Sigmoid colon (tissue), 7 donors: ENCODE measurements at regions of chr2 and their contacts with region 1.

Region 1: DNA sequence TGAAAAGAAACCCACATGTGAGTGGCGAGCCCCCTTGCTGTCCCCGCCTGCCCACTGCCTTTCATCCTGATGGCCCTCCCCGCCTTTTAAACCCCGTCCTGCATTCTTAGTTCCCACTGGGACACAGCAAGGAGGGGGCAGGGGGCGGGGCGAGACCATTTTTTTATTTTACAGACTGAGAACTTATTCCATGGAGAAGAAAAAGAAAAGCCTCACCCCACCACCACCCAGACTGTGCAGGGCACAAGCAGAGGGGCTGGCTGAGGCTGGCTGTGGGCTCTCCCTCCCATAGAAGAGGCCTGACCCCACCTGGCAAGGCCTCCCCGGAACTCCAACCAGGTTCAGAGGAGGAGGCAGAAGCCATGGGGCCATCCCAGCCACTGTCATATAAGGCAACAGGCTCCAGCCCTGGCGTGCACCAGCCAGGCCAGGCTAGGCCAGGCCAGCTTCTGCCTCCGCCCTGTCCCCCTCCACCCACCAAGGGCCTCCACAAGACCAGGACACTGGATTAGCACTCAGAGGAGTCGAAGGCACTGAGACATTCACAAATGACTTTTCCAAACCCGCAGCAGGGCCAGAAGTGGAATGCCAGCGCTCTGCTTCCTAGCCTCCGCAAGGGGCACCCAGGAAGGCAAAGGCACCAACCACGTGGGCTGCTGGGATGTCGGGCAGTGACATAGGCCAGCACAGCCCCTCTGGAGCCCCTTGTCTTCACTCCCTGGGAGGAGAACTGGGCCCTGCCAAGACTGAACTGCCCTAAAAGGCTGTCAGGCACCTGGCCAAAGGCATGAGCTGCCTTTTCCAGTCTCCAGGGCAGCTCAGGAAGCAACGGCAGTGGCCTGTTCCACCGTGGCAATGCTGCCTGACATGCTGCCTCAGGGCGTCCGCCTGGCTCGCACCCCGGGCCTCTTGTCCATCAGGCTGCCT is 37.5 kb upstream of the SEMA4C start:
- DNase-seq: peak; percentile 97
- H3K4me3 ChIP-seq: peak overlapping the region; percentile 23 to 30 (median 26)
- H3K27ac ChIP-seq: peak overlapping the region; percentile 92 to 97 (median 93)
- H3K4me1 ChIP-seq: peaks cover 5 to 62% (median 56%) of the 10 kb centered on the region in 4 donors
- H3K27me3 ChIP-seq: no peaks in the 10 kb centered on the region
- CTCF ChIP-seq: no peak
- EP300 ChIP-seq: peak in 2 of 4 donors; percentile 69 to 73
- POLR2A ChIP-seq: peak; percentile 50 to 56

Region 2: GRCh38 chr2:96868555-96869280 is 38.7 kb before region 1 on chr2:
- intact Hi-C with region 1: loop called (anchors 1 kb)
- DNase-seq: peak; percentile 97
- H3K4me3 ChIP-seq: peak overlapping the region; percentile 65 to 98 (median 96)
- H3K27ac ChIP-seq: peak overlapping the region; percentile 99 to 100 (median 100)
- H3K4me1 ChIP-seq: peaks cover 0 to 71% (median 67%) of the 10 kb centered on the region in 4 donors
- H3K27me3 ChIP-seq: no peaks in the 10 kb centered on the region
- CTCF ChIP-seq: peak; percentile 17 to 72 (median 23)
- EP300 ChIP-seq: no peak
- POLR2A ChIP-seq: no peak

Region 3: DNA sequence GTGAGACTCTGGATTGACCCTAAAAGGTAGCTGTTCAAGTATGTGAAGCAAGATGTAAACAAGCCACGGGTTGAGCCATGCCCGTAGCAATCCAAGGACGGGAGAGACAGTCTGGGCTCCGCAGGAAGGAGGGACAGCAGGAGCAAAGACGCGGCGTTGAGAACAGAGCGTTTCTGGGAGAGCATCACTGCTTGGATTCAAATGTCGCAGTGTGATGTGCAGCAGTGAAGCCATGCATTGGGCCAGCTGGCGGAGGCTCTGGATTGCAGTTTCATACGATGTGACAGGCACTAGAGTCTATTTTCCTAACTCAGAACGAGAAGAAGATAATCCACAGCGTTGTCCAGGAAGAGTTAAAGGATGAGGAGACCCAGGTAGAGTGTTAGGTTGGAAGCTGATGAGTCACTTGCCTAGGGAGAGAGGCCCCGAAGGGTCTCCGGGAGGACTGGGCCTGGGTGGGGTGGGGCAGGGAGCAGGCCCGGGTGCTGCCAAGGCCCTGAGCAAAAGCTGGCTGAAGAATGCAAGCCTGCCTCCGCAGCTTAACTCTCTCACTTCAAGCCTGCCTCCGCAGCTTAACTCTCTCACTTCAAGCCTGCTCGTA is 19.9 kb before region 1 on chr2:
- intact Hi-C with region 1: loop called (anchors 1 kb)
- DNase-seq: peak; percentile 90
- H3K4me3 ChIP-seq: peak overlapping the region in 3 of 4 donors; percentile 35 to 37 (median 37)
- H3K27ac ChIP-seq: peak overlapping the region; percentile 75 to 91 (median 88)
- H3K4me1 ChIP-seq: peaks cover 0 to 70% (median 65%) of the 10 kb centered on the region in 4 donors
- H3K27me3 ChIP-seq: no peaks in the 10 kb centered on the region
- CTCF ChIP-seq: no peak
- EP300 ChIP-seq: no peak
- POLR2A ChIP-seq: no peak

Region 4: DNA sequence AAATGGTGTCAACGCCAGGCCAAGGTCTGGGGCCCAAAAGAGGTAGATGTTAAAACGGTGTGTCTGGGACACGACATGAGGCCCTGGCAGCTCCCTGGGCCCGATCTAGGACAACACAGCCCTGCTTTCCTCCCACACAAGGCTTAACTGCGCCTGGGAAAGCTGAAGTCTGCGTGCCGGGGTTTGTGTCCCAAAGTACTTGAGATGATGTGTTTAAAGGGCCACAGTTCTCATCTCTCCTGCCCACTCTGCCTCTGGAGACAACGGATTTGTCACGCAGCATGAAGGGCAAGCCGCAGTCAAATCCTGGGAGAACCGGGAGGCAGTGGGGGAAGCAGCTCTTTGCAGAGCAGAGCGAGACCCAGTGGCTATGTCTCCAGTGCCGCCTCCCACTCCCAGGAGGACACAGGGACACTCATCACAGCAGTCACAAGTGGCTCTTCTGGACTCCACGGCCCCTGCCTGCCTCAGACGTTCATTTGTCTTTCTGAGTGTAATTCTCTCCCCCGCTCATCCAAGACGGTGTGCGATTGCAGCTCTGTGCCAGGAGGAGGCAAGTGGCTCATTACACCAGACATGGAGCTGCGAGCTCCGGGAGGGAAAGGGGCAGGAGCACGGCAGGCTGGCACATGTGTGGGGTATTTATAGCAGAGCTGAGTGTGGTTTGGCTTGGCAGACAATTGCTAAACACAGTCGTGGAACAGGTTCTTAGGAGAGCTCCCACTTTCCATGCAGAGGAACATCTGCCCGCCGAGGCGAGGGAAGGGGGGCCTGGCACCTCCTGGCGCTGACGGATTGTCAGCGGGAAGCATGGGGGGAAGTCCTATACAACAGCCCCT is 20.2 kb after region 1 on chr2:
- intact Hi-C with region 1: loop called (anchors 2 kb)
- DNase-seq: peak; percentile 96
- H3K4me3 ChIP-seq: peak overlapping the region; percentile 9 to 26 (median 22)
- H3K27ac ChIP-seq: peak overlapping the region; percentile 78 to 91 (median 85)
- H3K4me1 ChIP-seq: peaks cover 0 to 59% (median 36%) of the 10 kb centered on the region in 4 donors
- H3K27me3 ChIP-seq: no peaks in the 10 kb centered on the region
- CTCF ChIP-seq: peak; percentile 35 to 59 (median 49)
- EP300 ChIP-seq: peak in 1 of 4 donors; percentile 40
- POLR2A ChIP-seq: no peak

Region 5: DNA sequence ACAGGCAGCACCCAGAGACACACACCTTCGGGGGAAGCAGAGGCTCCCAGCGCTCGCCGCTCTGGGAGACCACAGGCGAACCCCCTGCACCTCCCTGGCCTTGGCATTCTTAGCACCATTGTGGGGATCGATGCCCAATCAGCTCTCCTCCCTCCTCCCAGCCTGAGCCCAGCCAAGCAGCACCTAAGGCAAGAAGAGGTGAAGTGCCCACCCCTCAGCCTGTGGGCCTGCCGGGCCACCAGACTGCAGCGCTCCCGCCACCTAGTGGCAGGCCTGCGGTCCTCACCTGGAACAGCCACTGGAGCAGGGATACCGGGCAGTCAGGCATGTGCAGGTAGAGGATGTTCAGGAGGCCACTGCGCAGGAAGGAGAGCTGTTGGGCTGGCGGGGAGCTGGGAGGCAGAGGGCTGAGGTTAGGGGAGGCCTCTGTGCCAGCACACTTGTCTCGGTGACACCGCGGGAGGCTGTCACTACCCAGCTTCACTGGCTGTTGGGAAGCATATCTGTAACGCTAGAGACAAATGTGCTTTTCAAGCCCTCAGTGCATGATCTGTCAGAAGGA is 43.8 kb after region 1 on chr2:
- intact Hi-C with region 1: loop called (anchors 1 kb)
- DNase-seq: peak; percentile 87
- H3K4me3 ChIP-seq: no peak overlapping the region
- H3K27ac ChIP-seq: peak overlapping the region; percentile 72 to 88 (median 82)
- H3K4me1 ChIP-seq: peaks cover 0 to 62% (median 55%) of the 10 kb centered on the region in 4 donors
- H3K27me3 ChIP-seq: no peaks in the 10 kb centered on the region
- CTCF ChIP-seq: peak; percentile 93 to 98 (median 96)
- EP300 ChIP-seq: no peak
- POLR2A ChIP-seq: no peak

Region 6: GRCh38 chr2:96977631-96978195 is 70.3 kb after region 1 on chr2:
- intact Hi-C with region 1: no loop called
- DNase-seq: no peak
- H3K4me3 ChIP-seq: peak overlapping the region in 2 of 4 donors; percentile 2 to 19
- H3K27ac ChIP-seq: peak overlapping the region in 1 of 4 donors; percentile 8
- H3K4me1 ChIP-seq: peaks cover 0 to 7% (median 3%) of the 10 kb centered on the region in 4 donors
- H3K27me3 ChIP-seq: no peaks in the 10 kb centered on the region
- CTCF ChIP-seq: no peak
- EP300 ChIP-seq: no peak
- POLR2A ChIP-seq: no peak